Calu3 (cell line): ENCODE measurements at regions of chr1 and their contacts with region 1.

Region 1: GRCh38 chr1:215001419-215002021 is 81.0 kb upstream of the KCNK2 start:
- DNase-seq: no peak
- H3K4me3 Mint-ChIP-seq: no peak overlapping the region
- H3K27ac Mint-ChIP-seq: no peak overlapping the region
- H3K4me1 Mint-ChIP-seq: peaks cover 22% of the 10 kb centered on the region
- H3K27me3 Mint-ChIP-seq: no peaks in the 10 kb centered on the region
- CTCF ChIP-seq: no peak

Region 2: DNA sequence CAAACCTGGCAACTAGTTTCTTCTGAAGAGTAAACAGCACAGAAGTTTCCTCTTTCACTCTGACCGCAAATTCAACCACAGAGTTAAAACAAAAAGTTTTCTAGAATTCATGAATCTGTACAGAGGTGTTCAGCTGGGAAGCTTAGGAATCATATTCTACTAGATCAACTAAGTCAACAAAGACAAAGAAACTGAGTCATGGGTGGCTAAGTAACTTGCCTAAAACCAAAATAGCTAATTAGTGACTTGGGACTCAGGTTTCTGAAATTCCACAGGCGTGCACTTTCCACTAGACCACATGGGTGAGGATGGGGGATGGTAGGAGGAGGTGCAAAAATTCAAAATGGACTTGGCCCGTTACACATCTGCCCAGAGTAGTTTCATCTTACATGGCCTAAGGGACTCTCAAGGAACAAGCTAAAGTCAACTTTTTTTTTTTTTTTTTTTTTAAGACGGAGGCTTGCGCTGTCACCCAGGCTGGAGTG is 475.9 kb before region 1 on chr1:
- CTCF ChIA-PET with region 1: no interaction called
- intact Hi-C with region 1: no loop called
- DNase-seq: no peak
- H3K4me3 Mint-ChIP-seq: no peak overlapping the region
- H3K27ac Mint-ChIP-seq: no peak overlapping the region
- H3K4me1 Mint-ChIP-seq: peaks cover 63% of the 10 kb centered on the region
- H3K27me3 Mint-ChIP-seq: no peaks in the 10 kb centered on the region
- CTCF ChIP-seq: no peak

Region 3: DNA sequence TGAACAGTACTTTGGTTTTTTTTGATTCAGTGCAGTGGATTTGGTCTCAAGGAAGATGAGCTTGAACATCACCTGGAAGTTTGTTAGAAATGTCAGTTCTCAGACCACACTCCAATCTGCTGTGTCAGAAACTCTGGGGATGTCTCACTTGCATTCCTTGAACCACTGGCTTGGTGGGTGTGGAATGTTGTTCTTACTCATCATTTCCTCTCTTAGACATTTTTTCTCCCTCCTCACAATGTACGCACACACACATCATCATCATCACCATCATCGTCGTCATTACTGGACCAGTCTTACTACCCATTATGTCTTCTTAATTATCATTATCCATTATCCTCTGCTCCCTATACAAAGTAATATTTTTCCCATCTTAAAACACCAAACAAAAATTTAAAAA is 10.9 kb before region 1 on chr1:
- CTCF ChIA-PET with region 1: no interaction called
- intact Hi-C with region 1: no loop called
- DNase-seq: no peak
- H3K4me3 Mint-ChIP-seq: no peak overlapping the region
- H3K27ac Mint-ChIP-seq: no peak overlapping the region
- H3K4me1 Mint-ChIP-seq: peaks cover 7% of the 10 kb centered on the region
- H3K27me3 Mint-ChIP-seq: no peaks in the 10 kb centered on the region
- CTCF ChIP-seq: no peak

Region 4: GRCh38 chr1:215146341-215146826 is 144.9 kb after region 1 on chr1:
- CTCF ChIA-PET with region 1: no interaction called
- intact Hi-C with region 1: loop called (anchors 10 kb)
- DNase-seq: peak; percentile 40
- H3K4me3 Mint-ChIP-seq: no peak overlapping the region
- H3K27ac Mint-ChIP-seq: no peak overlapping the region
- H3K4me1 Mint-ChIP-seq: no peaks in the 10 kb centered on the region
- H3K27me3 Mint-ChIP-seq: no peaks in the 10 kb centered on the region
- CTCF ChIP-seq: peak; percentile 64